GM10248 (cell line): ENCODE measurements at regions of chr1 and their contacts with region 1.

Region 1: GRCh38 chr1:67832737-67833601 is at the start of gene GNG12:
- DNase-seq: peak; percentile 61
- CTCF ChIP-seq: no peak

Region 2: DNA sequence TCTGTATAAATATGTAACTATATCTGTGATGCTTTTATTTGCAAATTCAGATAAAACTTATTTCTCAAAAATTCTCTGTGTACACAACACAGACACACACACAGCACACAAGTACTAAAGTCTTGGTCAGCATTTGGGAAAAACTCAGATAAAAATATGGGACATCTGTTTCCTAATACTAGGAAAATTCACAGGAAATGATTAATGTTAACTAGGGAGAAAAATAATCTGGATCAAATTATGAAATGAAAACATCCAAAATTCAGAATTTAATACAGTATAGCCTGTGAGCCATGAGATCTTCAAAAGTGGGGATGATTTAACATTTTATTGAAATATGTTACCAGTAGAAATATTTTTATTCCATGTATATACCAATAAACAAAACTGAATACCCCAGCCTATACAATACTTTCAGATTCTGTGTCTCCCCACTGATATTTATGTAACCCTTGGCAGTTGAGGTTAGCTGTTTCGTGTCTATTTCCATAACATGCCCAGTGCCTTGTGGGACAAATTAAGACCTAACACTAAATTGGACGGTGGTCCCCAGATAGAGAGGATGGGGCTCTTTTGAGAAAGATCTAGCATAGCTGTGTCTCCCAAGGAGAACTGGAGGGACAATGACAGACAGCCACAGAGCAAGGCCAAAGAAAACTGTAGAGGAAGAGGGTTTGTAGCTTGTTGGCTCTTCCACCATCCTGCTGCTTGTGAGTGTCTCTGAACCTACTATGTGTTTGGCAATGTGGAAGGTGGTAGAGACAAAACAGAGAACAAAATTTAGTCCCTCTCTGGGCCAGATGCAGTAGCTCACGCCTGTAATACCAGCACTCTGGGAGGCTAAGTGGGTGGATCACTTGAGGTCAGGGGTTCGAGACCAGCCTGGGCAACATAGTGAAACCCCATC is 46.9 kb before region 1 on chr1:
- CTCF ChIA-PET with region 1: interaction called, 11 read pairs
- POLR2A ChIA-PET with region 1: no interaction called
- DNase-seq: no peak
- CTCF ChIP-seq: no peak

Region 3: DNA sequence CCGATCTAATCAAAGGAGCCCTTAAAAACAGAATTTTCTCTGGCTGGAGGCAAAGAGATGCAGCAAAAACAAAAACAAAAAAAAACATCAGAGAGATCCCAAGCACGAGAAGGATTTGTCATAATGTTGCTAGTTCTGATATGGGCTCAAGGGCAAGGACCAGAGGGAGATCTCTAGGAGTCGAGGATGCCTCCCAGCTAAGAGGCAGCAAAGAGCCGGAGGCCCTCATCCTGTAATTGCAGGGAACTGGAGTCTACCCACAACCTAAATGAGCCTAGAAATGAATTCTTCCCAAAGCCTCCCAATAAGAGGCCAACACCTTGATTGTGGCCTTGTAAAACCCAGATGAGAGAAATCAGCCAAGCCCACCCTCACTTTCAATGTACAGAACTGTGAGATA is 11.7 kb before region 1 on chr1:
- CTCF ChIA-PET with region 1: interaction called, 11 read pairs
- POLR2A ChIA-PET with region 1: interaction called, 3 read pairs
- DNase-seq: no peak
- CTCF ChIP-seq: no peak

Region 4: DNA sequence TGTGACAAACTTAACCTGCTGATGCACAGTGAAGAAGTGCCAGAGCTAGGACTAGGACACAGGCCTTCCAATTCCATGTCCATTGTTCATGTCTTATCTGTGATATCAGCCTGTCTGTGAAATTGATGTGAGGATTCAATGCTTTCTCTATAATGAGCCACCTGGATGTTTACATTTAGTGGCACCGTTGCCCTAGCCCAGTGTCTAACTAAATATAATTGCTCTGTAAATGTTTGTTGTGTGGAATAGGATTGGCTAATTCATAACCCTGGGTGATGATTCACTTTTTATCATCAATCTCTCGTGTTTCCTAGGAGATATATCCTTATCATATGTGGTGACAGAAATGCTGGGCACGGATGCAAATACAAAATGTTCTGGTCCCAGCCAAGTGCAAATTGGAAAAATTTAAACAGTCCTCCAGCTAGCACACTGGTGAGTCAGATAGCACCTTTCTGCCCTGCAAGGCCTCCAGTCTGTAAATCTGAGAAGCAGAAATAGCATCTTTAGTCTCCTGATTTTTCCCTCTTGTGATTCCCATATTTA is 47.2 kb after region 1 on chr1:
- CTCF ChIA-PET with region 1: no interaction called
- POLR2A ChIA-PET with region 1: no interaction called
- DNase-seq: no peak
- CTCF ChIP-seq: no peak